ENCODE measurements at regions of chr1 and their contacts with region 1.

Region 1: GRCh38 chr1:161374373-161374772 is 6.7 kb upstream of the CFAP126 start:
- DNase-seq: peak; percentile 53
- ATAC-seq: peak; percentile 76
- H3K4me3 ChIP-seq: no peak overlapping the region
- H3K27ac ChIP-seq: no peak overlapping the region
- H3K4me1 ChIP-seq: no peaks in the 10 kb centered on the region
- H3K27me3 ChIP-seq: no peaks in the 10 kb centered on the region
- CTCF ChIP-seq: peak; percentile 66

Region 2: DNA sequence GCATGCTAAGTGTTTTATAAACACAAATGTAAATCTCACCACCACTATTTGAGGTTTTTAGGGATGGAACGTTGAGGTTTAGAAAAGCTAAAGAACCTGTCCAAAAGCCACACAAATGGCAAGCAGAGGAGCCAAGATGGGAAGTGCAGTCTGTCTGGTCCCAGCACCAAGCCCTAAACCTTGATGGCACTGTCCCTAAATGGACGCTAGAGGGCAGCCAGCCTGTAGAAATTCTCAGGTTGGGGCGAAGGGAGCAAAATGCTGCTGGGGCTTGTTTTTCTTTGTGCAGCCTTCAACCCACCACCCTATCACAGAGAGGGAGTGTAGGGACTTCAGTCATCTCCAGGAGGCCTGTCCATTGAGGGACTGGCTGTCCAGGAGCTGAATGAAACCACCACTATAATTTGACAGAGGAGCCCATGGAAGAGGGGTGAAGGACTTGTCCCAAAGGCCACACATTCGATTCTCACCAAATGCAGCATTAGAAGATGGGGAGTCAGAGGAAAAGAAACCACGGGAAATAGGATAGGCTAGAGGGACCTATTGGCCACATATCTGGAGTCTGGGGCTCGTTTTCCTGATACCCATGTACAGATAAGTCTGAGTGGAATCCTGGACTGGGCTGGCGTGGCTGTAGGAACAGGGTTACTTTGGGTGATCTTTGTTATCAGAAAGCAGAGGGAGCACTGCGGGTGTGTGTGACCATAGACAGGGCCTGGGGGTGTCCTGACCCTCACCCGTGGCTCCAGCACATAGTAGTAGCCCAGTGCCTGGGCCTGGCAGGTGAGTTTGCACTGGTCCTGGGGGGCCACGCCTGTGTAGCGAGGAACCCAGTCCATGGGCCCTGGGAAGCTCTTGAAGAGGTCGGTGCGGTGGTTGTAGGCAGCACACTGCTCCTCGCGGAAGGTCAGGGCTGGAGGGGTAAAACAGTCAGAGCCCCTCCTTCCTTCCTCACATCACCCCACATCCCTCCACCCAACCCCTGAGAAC is 181.6 kb before region 1 on chr1:
- CTCF ChIA-PET with region 1: interaction called, 5 read pairs
- POLR2A ChIA-PET with region 1: no interaction called
- intact Hi-C with region 1: loop called (anchors 1 kb)
- DNase-seq: peak; percentile 85
- ATAC-seq: peak; percentile 92
- H3K4me3 ChIP-seq: no peak overlapping the region
- H3K27ac ChIP-seq: no peak overlapping the region
- H3K4me1 ChIP-seq: no peaks in the 10 kb centered on the region
- H3K27me3 ChIP-seq: no peaks in the 10 kb centered on the region
- CTCF ChIP-seq: peak; percentile 96

Region 3: GRCh38 chr1:161209790-161210409 is 164.5 kb before region 1 on chr1:
- CTCF ChIA-PET with region 1: no interaction called
- POLR2A ChIA-PET with region 1: no interaction called
- intact Hi-C with region 1: loop called (anchors 5 kb)
- DNase-seq: peak; percentile 92
- ATAC-seq: peak; percentile 96
- H3K4me3 ChIP-seq: no peak overlapping the region
- H3K27ac ChIP-seq: no peak overlapping the region
- H3K4me1 ChIP-seq: no peaks in the 10 kb centered on the region
- H3K27me3 ChIP-seq: no peaks in the 10 kb centered on the region
- CTCF ChIP-seq: peak; percentile 98

Measured in PC-3 (cell line).